ENCODE measurements at regions of chr20 and their contacts with region 1.

Region 1: GRCh38 chr20:37990571-37991151 is 42.6 kb downstream of the TTI1 start:
- DNase-seq: peak; percentile 98
- ATAC-seq: peak; percentile 88
- H3K4me3 ChIP-seq: no peak overlapping the region
- H3K27ac ChIP-seq: peak overlapping the region; percentile 94
- H3K4me1 ChIP-seq: peaks cover 91% of the 10 kb centered on the region
- H3K27me3 ChIP-seq: no peaks in the 10 kb centered on the region
- CTCF ChIP-seq: no peak

Region 2: DNA sequence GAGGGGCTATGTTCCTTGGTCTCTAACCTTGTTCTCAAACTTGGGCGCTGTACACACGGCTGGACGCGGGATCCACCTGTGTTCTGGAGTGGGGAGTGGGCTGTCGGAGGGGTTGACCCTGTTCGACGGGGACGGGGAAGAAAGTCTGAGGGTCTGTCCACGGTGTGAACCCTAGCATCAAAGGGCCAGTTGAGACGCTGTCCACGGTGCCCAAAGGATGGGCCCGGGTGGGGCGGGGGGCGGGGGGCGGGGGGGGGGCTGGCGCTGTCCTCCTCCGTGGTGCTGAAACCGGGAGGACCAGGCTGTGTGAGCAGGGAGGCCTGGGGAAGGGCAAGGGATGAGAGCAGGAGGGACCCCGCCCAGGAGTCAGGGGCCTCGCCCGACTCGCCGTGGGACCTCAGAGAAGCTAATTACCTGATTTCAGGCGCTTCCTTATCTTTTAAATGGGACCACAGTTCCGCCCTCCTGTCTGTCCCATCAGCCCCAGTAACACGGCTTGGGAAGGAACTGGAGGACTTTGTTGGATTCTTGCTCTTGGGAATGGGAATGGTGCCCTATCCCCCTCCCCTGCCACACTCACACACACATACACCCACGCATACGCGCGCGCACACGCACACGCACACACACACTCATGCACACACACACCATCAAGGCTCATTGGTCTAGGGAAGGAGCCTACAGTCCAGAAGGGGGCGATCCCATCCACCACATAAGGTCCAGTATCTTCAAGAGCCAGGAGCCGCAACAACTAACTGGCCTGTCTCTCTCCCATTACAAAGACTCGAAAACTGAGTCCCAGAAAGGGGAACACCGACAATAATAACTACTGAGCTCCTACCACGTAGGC is 88.8 kb before region 1 on chr20:
- CTCF ChIA-PET with region 1: interaction called, 9 read pairs
- POLR2A ChIA-PET with region 1: no interaction called
- intact Hi-C with region 1: loop called (anchors 1 kb)
- DNase-seq: peak; percentile 74
- ATAC-seq: peak; percentile 70
- H3K4me3 ChIP-seq: peak overlapping the region; percentile 69
- H3K27ac ChIP-seq: no peak overlapping the region
- H3K4me1 ChIP-seq: peaks cover 6% of the 10 kb centered on the region
- H3K27me3 ChIP-seq: no peaks in the 10 kb centered on the region
- CTCF ChIP-seq: peak; percentile 83

Region 3: GRCh38 chr20:37956084-37956483 is 34.6 kb before region 1 on chr20:
- CTCF ChIA-PET with region 1: interaction called, 6 read pairs
- POLR2A ChIA-PET with region 1: no interaction called
- intact Hi-C with region 1: loop called (anchors 1 kb)
- DNase-seq: peak; percentile 85
- ATAC-seq: peak; percentile 92
- H3K4me3 ChIP-seq: no peak overlapping the region
- H3K27ac ChIP-seq: no peak overlapping the region
- H3K4me1 ChIP-seq: peaks cover 11% of the 10 kb centered on the region
- H3K27me3 ChIP-seq: no peaks in the 10 kb centered on the region
- CTCF ChIP-seq: no peak

Region 4: DNA sequence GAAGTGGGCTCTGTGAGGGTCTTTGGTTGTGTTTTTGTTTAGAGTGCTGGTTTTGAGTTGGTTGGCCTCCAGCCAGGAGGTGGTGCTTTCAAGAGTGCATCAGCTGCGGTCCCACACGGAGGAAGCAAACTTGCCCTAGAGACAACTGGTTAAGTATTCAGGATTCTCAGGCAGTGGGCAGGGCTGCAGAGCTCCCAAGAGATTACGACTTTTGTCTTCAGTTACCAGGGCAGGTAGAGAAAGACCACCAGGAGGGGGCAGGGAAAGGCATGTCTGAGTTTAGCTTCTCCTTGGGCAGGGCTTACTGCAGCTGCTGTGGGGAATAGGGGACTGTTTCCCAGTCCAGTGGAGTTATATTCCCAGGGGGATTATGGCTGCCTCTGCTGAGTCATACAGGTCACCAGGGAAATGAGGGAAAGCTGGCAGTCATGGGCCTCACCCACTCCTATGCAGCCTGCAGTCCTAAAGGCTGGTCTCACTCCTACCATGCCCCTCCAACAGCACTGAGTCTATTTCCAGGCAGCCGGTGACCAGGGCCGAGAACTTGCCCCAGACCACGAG is 21.7 kb before region 1 on chr20:
- CTCF ChIA-PET with region 1: no interaction called
- POLR2A ChIA-PET with region 1: no interaction called
- intact Hi-C with region 1: no loop called
- DNase-seq: peak; percentile 33
- ATAC-seq: peak; percentile 41
- H3K4me3 ChIP-seq: no peak overlapping the region
- H3K27ac ChIP-seq: no peak overlapping the region
- H3K4me1 ChIP-seq: peaks cover 21% of the 10 kb centered on the region
- H3K27me3 ChIP-seq: no peaks in the 10 kb centered on the region
- CTCF ChIP-seq: no peak

Region 5: GRCh38 chr20:38023181-38024001 is 32.7 kb after region 1 on chr20:
- CTCF ChIA-PET with region 1: interaction called, 7 read pairs
- POLR2A ChIA-PET with region 1: no interaction called
- intact Hi-C with region 1: loop called (anchors 1 kb)
- DNase-seq: peak; percentile 61
- ATAC-seq: peak; percentile 87
- H3K4me3 ChIP-seq: no peak overlapping the region
- H3K27ac ChIP-seq: peak overlapping the region; percentile 45
- H3K4me1 ChIP-seq: peaks cover 42% of the 10 kb centered on the region
- H3K27me3 ChIP-seq: no peaks in the 10 kb centered on the region
- CTCF ChIP-seq: no peak

Region 6: DNA sequence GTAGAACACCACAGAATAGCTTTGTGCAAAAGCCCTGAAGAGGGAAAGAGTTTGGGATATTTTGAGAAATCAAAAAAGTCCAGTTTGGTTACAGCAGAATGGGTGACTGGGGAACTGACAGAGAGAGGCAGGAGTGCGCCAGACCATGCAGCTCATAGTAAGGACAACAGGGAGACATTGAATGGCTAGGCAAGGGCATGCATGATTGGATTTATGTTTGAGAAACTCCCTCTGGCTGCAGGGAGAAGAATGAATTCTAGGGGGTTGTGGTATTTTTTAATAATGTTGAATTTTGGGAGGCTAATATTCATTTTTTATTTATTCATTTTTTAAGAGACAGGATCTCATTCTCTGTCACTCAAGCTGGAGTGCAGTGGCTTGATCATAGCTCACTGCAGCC is 124.5 kb after region 1 on chr20:
- CTCF ChIA-PET with region 1: no interaction called
- POLR2A ChIA-PET with region 1: no interaction called
- intact Hi-C with region 1: no loop called
- DNase-seq: no peak
- ATAC-seq: no peak
- H3K4me3 ChIP-seq: no peak overlapping the region
- H3K27ac ChIP-seq: no peak overlapping the region
- H3K4me1 ChIP-seq: peaks cover 50% of the 10 kb centered on the region
- H3K27me3 ChIP-seq: no peaks in the 10 kb centered on the region
- CTCF ChIP-seq: peak; percentile 32; the same call in 1 of the 2 replicates